Colonic mucosa (tissue), 4 donors: ENCODE measurements at regions of chr5 and their contacts with region 1.

Region 1: GRCh38 chr5:155616779-155617392 is 603.3 kb downstream of the KIF4B start:
- DNase-seq: peak; percentile 66
- H3K4me3 ChIP-seq: no peak overlapping the region
- H3K27ac ChIP-seq: no peak overlapping the region
- H3K4me1 ChIP-seq: no peaks in the 10 kb centered on the region
- H3K27me3 ChIP-seq: no peaks in the 10 kb centered on the region
- CTCF ChIP-seq: peak; percentile 72

Region 2: DNA sequence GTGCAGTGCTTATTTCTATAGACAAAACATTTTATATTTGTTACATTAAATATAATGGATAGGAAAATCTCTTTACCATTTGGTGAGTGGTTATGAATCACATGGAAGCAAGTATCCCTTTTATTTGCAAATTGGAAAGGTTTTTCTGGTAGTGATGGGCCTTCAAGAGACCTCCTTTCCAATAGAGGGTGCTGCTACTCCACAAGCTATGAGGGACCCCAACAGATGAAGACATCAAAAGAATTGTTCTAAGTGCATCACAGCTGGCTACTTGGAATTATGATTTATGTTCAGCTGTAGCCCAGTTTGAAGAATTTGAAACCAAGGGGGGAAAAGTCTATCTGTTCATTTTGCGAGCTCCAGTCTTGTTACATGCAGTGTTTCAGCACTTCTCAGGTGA is 216.4 kb after region 1 on chr5:
- intact Hi-C with region 1: no loop called
- DNase-seq: no peak
- H3K4me3 ChIP-seq: no peak overlapping the region
- H3K27ac ChIP-seq: no peak overlapping the region
- H3K4me1 ChIP-seq: no peaks in the 10 kb centered on the region
- H3K27me3 ChIP-seq: no peaks in the 10 kb centered on the region
- CTCF ChIP-seq: no peak

Region 3: DNA sequence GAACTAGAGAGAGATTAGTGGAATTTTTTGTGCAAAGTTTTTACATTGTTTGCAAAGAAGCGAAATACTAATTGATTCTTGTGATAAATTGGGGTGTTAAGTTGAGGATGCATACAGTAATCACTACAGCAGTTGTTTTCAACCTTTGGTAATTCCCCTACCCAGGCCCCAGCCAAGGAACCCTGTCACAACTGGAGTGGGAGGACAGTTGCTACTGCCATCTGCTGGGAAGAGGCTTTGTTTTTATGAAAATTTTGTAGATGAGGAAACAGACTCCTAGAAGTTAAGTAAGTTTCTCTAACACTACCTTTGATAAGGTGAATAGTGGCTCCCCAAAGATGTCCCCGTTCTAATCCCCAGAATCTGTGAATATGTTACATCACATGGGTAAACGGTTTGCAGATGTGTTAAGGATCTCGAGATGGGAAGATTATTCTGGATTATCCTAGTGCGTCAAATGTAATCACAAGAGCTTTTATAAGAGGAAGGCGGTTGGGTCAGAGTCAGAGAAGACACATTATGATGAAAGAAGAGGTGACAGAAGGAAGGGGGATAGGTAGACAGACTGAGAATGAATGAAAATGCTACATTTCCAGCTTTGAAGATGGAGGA is 1199.2 kb after region 1 on chr5:
- intact Hi-C with region 1: loop called (anchors 10 kb)
- DNase-seq: peak; percentile 25
- H3K4me3 ChIP-seq: no peak overlapping the region
- H3K27ac ChIP-seq: no peak overlapping the region
- H3K4me1 ChIP-seq: no peaks in the 10 kb centered on the region
- H3K27me3 ChIP-seq: no peaks in the 10 kb centered on the region
- CTCF ChIP-seq: peak; percentile 20